ENCODE measurements at regions of chr20 and their contacts with region 1.

Region 1: GRCh38 chr20:62999580-62999979 is 7.2 kb downstream of the BHLHE23 start:
- DNase-seq: no peak
- ATAC-seq: no peak
- H3K4me3 ChIP-seq: no peak overlapping the region
- H3K4me3 Mint-ChIP-seq: no peak overlapping the region
- H3K27ac ChIP-seq: no peak overlapping the region
- H3K27ac Mint-ChIP-seq: no peak overlapping the region
- H3K4me1 ChIP-seq: peaks cover 4% of the 10 kb centered on the region
- H3K4me1 Mint-ChIP-seq: peaks cover 3% of the 10 kb centered on the region
- H3K27me3 ChIP-seq: peaks cover 25 to 38% of the 10 kb centered on the region in 2 experiments
- H3K27me3 Mint-ChIP-seq: peaks cover 61% of the 10 kb centered on the region
- CTCF ChIP-seq: no peak

Region 2: GRCh38 chr20:62972270-62973032 is 27.1 kb before region 1 on chr20:
- CTCF ChIA-PET with region 1: interaction called, 10 read pairs
- POLR2A ChIA-PET with region 1: interaction called, 8 read pairs
- intact Hi-C with region 1: no loop called
- DNase-seq: peak; percentile 77 to 90 (median 86)
- ATAC-seq: peak; percentile 100
- H3K4me3 ChIP-seq: peak overlapping the region; percentile 35
- H3K4me3 Mint-ChIP-seq: peak overlapping the region; percentile 76
- H3K27ac ChIP-seq: no peak overlapping the region
- H3K27ac Mint-ChIP-seq: no peak overlapping the region
- H3K4me1 ChIP-seq: peaks cover 19% of the 10 kb centered on the region
- H3K4me1 Mint-ChIP-seq: peaks cover 23% of the 10 kb centered on the region
- H3K27me3 ChIP-seq: peaks cover 38 to 44% of the 10 kb centered on the region in 2 experiments
- H3K27me3 Mint-ChIP-seq: peaks cover 53% of the 10 kb centered on the region
- CTCF ChIP-seq: peak; percentile 81

Measured in CD4-positive, alpha-beta T cell (primary cell).